HEK293 (cell line): ENCODE measurements at regions of chr16 and their contacts with region 1.

Region 1: GRCh38 chr16:67260426-67261075 is 11.8 kb downstream of the SLC9A5 start:
- H3K4me3 ChIP-seq: no peak overlapping the region
- H3K27ac ChIP-seq: no peak overlapping the region
- H3K4me1 ChIP-seq: no peaks in the 10 kb centered on the region
- CTCF ChIP-seq: peak; percentile 71

Region 2: GRCh38 chr16:67104061-67104460 is 156.5 kb before region 1 on chr16:
- CTCF ChIA-PET with region 1: no interaction called
- POLR2A ChIA-PET with region 1: no interaction called
- H3K4me3 ChIP-seq: no peak overlapping the region
- H3K27ac ChIP-seq: no peak overlapping the region
- H3K4me1 ChIP-seq: peaks cover 5% of the 10 kb centered on the region; the same call in 1 of the 2 replicates
- CTCF ChIP-seq: no peak

Region 3: GRCh38 chr16:67183627-67184328 is 76.8 kb before region 1 on chr16 and contains the start of gene MATCAP1:
- CTCF ChIA-PET with region 1: no interaction called
- POLR2A ChIA-PET with region 1: no interaction called
- H3K4me3 ChIP-seq: peak within 1 kb of the TSS; percentile 84
- H3K27ac ChIP-seq: peak within 1 kb of the TSS; percentile 88
- H3K4me1 ChIP-seq: peaks cover 9% of the 10 kb centered on the region
- CTCF ChIP-seq: 0 out of 2 replicates have a peak, but pooled peaks have one; percentile 38

Region 4: GRCh38 chr16:67279296-67280089 is 18.9 kb after region 1 on chr16 and contains the start of gene PLEKHG4:
- CTCF ChIA-PET with region 1: interaction called, 15 read pairs
- POLR2A ChIA-PET with region 1: no interaction called
- H3K4me3 ChIP-seq: peak within 1 kb of the TSS; percentile 50
- H3K27ac ChIP-seq: peak within 1 kb of the TSS; percentile 50; the same call in 1 of the 2 replicates
- H3K4me1 ChIP-seq: no peaks in the 10 kb centered on the region
- CTCF ChIP-seq: no peak

Region 5: DNA sequence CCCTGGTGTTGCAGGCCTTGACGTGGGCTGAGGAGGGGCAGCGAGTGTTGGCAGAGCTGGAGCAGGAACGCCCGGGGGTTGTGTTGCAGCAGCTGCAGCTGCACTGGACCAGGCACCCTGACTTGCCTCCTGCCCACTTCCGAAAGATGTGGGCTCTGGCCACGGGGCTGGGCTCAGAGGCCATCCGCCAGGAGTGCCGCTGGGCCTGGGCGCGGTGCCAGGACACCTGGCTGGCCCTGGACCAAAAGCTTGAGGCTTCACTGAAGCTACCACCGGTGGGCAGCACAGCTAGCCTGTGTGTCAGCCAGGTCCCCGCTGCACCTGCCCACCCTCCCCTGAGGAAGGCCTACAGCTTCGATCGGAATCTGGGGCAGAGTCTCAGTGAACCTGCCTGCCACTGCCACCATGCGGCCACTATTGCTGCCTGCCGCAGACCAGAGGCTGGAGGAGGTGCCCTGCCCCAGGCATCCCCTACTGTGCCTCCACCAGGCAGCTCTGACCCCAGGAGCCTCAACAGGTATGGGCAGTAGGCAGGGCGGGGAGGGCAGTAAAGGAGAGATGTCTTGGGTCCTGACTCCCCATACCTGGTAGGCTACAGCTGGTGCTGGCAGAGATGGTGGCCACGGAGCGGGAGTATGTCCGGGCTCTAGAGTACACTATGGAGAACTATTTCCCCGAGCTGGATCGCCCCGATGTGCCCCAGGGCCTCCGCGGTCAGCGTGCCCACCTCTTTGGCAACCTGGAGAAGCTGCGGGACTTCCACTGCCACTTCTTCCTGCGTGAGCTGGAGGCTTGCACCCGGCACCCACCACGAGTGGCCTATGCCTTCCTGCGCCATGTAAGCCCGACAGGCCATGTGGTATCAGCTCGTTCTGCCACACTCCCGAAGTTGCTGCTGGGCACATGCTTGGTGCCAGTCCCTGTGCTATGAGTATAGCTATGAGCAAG is 24.4 kb after region 1 on chr16:
- CTCF ChIA-PET with region 1: interaction called, 15 read pairs
- POLR2A ChIA-PET with region 1: no interaction called
- H3K4me3 ChIP-seq: no peak overlapping the region
- H3K27ac ChIP-seq: no peak overlapping the region
- H3K4me1 ChIP-seq: no peaks in the 10 kb centered on the region
- CTCF ChIP-seq: peak; percentile 48; the same call in 1 of the 2 replicates

Region 6: DNA sequence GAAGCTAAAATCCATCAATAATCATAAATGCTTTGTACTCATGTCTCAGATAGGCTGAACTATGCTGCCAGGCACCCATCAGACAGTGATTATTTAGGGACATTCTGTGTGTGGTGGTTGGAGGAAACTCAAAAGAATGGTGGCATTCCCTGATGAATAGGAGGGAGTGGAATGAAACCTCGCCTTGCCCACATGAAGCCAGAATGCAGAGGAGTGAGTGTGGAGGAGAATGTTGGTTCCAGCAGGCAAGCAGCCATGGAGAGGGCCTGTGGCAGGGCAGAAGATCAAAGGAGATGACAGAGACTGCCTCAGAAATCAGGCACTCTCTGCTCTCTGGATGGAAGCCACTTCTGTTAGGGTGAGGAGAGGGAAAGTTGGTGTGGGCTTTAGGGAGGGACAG is 43.5 kb after region 1 on chr16:
- CTCF ChIA-PET with region 1: no interaction called
- POLR2A ChIA-PET with region 1: no interaction called
- H3K4me3 ChIP-seq: no peak overlapping the region
- H3K27ac ChIP-seq: no peak overlapping the region
- H3K4me1 ChIP-seq: no peaks in the 10 kb centered on the region
- CTCF ChIP-seq: no peak

Region 7: GRCh38 chr16:67339453-67339852 is 78.9 kb after region 1 on chr16:
- CTCF ChIA-PET with region 1: interaction called, 22 read pairs
- POLR2A ChIA-PET with region 1: interaction called, 4 read pairs
- H3K4me3 ChIP-seq: no peak overlapping the region
- H3K27ac ChIP-seq: no peak overlapping the region
- H3K4me1 ChIP-seq: no peaks in the 10 kb centered on the region
- CTCF ChIP-seq: no peak

Region 8: DNA sequence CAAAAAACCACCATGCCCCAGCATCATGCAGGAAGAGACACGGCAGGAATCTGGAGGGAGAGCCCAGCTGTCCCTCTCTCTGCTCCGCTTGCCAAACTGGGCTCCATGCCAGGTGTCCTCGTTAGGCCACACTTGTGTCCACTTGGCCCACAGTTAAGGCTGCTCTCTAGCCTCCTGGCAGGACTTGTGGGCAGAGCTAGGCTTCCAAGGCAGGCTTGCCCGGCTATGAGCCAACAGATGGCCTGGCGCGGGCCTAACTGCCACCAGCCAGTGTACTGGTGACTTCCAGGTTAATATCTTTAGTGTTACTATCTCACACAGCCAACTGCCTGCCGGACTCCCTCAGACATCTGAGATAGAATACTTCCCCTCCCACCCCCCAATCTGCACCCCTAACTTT is 209.8 kb after region 1 on chr16:
- CTCF ChIA-PET with region 1: interaction called, 11 read pairs
- POLR2A ChIA-PET with region 1: no interaction called
- H3K4me3 ChIP-seq: no peak overlapping the region
- H3K27ac ChIP-seq: no peak overlapping the region
- H3K4me1 ChIP-seq: peaks cover 6% of the 10 kb centered on the region; the same call in 1 of the 2 replicates
- CTCF ChIP-seq: no peak